ENCODE measurements at regions of chr18 and their contacts with region 1.

Region 1: GRCh38 chr18:21284540-21284939 is 42.5 kb downstream of the GREB1L start:
- DNase-seq: no peak
- H3K4me3 Mint-ChIP-seq: no peak overlapping the region
- H3K27ac Mint-ChIP-seq: no peak overlapping the region
- H3K4me1 Mint-ChIP-seq: no peaks in the 10 kb centered on the region
- H3K27me3 Mint-ChIP-seq: no peaks in the 10 kb centered on the region
- CTCF ChIP-seq: no peak

Region 2: GRCh38 chr18:21303913-21304312 is 19.4 kb after region 1 on chr18:
- CTCF ChIA-PET with region 1: no interaction called
- intact Hi-C with region 1: loop called (anchors 2 kb)
- DNase-seq: no peak
- H3K4me3 Mint-ChIP-seq: no peak overlapping the region
- H3K27ac Mint-ChIP-seq: no peak overlapping the region
- H3K4me1 Mint-ChIP-seq: no peaks in the 10 kb centered on the region
- H3K27me3 Mint-ChIP-seq: no peaks in the 10 kb centered on the region
- CTCF ChIP-seq: no peak

Region 3: DNA sequence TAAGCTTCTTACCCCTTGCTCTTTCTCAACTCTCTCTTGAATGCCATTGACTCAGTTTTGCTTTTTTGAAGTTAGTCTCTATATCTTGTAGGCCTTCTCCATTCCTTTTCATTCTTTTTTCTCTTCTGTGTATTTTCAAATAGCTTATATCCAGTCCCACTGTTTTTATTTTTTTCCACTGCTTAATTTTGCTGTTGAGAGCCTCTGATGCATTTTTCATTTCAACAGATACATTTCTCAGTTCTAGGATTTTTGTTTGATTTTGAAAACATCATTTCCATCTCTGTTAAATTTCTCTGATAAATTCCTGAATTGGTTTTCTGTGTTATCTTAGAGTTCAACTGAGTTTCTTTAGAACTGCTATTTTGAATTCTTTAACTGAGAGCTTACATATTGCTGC is 502.0 kb after region 1 on chr18:
- CTCF ChIA-PET with region 1: no interaction called
- intact Hi-C with region 1: no loop called
- DNase-seq: no peak
- H3K4me3 Mint-ChIP-seq: no peak overlapping the region
- H3K27ac Mint-ChIP-seq: no peak overlapping the region
- H3K4me1 Mint-ChIP-seq: no peaks in the 10 kb centered on the region
- H3K27me3 Mint-ChIP-seq: no peaks in the 10 kb centered on the region
- CTCF ChIP-seq: no peak